ENCODE measurements at regions of chr3 and their contacts with region 1.

Region 1: DNA sequence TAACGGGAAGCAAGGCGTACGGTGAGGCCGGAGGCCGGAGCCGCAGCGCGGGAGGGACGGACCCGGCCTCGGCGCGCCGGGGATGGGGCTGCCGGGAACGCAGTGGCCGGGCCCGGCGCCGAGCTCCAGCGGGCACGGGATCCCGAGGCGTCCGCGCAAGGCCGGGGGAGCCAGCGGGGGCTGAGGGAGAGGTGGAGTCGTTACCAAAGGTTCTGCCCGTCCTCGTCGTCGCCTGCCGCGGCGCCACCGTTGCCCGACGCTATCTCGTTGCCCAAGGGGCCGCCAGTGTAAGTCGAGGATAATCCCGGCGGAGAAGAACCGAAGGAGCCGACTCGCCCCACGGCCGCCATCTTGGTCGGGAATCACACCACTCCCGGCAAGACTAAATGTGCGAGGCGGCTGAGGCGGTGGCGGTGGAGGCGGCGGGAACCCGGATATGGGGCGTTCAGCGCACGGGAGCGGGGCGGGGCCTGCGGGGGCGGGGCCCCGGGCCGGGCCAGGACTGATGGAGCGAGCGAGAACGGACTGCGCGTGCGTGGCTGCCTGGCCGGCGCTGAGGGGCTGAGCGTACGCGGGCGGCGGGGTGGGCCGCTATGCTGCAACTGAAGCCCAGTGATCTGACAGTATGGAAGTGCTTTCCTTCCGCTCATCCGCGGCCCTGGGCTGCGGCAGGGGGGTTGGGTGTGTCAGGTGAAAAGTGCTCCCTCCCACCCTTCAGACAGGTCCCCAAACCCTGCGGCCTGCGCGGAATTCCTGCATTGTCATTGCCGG is at the start of gene DYNC1LI1:
- DNase-seq: peak; percentile 87 to 96 (median 92)
- H3K4me3 ChIP-seq: peak within 1 kb of the TSS; percentile 54 to 99 (median 91)
- H3K27ac ChIP-seq: peak within 1 kb of the TSS; percentile 78 to 99 (median 97)
- H3K27me3 ChIP-seq: no peaks in the 10 kb centered on the region
- CTCF ChIP-seq: peak in 16 of 56 donors; percentile 1 to 41 (median 17)
- total RNA-seq, gene DYNC1LI1: 31.2 to 67.3 (median 50.5) TPM

Region 2: GRCh38 chr3:32502118-32502945 is 68.3 kb before region 1 on chr3 and contains the start of gene CMTM6:
- intact Hi-C with region 1: loop called (anchors 2 to 5 kb)
- DNase-seq: peak; percentile 63 to 87 (median 81)
- H3K4me3 ChIP-seq: peak within 1 kb of the TSS; percentile 57 to 100 (median 91)
- H3K27ac ChIP-seq: peak within 1 kb of the TSS; percentile 47 to 96 (median 91)
- H3K27me3 ChIP-seq: no peaks in the 10 kb centered on the region
- CTCF ChIP-seq: peak in 13 of 56 donors; percentile 6 to 49 (median 18)
- total RNA-seq, gene CMTM6: 6.4 to 19.8 (median 10.5) TPM

Region 3: DNA sequence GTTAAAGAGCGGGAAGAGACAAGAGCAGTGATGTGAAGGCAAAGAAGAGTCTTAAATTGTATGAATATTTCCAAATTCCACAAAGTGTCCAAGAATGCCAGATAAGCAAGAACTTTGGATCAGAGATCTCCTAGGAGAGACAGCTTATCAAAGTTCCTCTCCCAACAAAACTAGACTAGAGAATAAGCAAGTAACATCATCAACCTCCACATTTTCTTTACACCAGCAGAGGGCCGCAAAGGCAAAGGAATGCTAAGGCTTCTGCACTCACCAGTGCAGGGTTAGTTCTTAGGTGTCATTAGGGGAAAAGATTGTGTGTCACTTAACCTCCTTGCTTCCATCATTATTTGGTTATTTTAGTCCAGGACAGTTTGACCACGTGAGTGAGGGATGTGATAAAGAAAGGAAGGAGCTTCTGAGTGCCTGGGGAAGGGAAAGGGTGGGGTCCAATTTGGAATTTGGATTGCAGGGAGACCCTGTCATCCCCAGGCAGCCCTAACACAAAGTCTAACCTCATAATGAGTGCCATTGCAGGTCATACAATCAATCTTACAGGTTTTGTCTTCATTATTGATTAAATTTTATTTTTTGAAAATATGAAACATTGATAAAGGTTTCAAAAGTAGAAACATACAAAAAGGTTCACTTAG is 60.4 kb before region 1 on chr3:
- intact Hi-C with region 1: loop called in 1 of 2 experiments (anchors 5 kb)
- DNase-seq: peak in 9 of 10 donors; percentile 34 to 83 (median 63)
- H3K4me3 ChIP-seq: no peak overlapping the region
- H3K27ac ChIP-seq: no peak overlapping the region
- H3K27me3 ChIP-seq: no peaks in the 10 kb centered on the region
- CTCF ChIP-seq: peak; percentile 46 to 92 (median 78)

Region 4: GRCh38 chr3:32684800-32685542 is 114.4 kb after region 1 on chr3 and contains the start of gene CNOT10:
- intact Hi-C with region 1: loop called (anchors 10 kb)
- DNase-seq: peak; percentile 92 to 99 (median 96)
- H3K4me3 ChIP-seq: peak within 1 kb of the TSS; percentile 62 to 99 (median 87)
- H3K27ac ChIP-seq: peak within 1 kb of the TSS in 58 of 59 donors; percentile 13 to 93 (median 82)
- H3K27me3 ChIP-seq: no peaks in the 10 kb centered on the region
- CTCF ChIP-seq: peak in 42 of 56 donors; percentile 4 to 66 (median 42)
- total RNA-seq, gene CNOT10: 22.8 to 54.2 (median 35.4) TPM

Measured in dorsolateral prefrontal cortex (tissue), 120 donors.